ENCODE measurements at regions of chr22 and their contacts with region 1.

Region 1: DNA sequence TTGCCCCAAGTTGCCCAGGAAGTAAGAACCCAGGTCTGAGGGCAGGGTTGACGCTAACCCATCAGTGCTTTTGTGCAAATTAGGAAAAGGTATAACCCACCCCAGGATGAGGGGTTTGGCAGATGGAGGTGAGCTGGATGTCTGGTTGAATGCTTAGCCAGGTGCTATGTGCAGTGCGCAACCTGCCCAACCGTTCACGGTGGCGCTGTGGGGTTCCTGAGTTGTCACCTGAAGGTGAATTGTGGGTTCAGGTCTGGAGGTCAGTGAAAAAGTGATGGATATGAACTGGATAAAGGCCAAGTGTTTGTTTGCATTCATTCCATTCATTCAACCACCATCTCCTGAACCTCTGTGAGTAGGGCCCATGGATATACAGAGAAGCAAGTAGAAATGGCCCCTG is 14.3 kb upstream of the LGALS2 start:
- DNase-seq: no peak
- H3K4me3 Mint-ChIP-seq: no peak overlapping the region
- H3K27ac Mint-ChIP-seq: no peak overlapping the region
- H3K4me1 Mint-ChIP-seq: peaks cover 13% of the 10 kb centered on the region
- H3K27me3 Mint-ChIP-seq: no peaks in the 10 kb centered on the region

Region 2: GRCh38 chr22:37316875-37317371 is 277.3 kb before region 1 on chr22:
- CTCF ChIA-PET with region 1: interaction called, 4 read pairs
- intact Hi-C with region 1: loop called (anchors 1 kb)
- DNase-seq: peak; percentile 85
- H3K4me3 Mint-ChIP-seq: no peak overlapping the region
- H3K27ac Mint-ChIP-seq: no peak overlapping the region
- H3K4me1 Mint-ChIP-seq: peaks cover 21% of the 10 kb centered on the region
- H3K27me3 Mint-ChIP-seq: no peaks in the 10 kb centered on the region

Region 3: DNA sequence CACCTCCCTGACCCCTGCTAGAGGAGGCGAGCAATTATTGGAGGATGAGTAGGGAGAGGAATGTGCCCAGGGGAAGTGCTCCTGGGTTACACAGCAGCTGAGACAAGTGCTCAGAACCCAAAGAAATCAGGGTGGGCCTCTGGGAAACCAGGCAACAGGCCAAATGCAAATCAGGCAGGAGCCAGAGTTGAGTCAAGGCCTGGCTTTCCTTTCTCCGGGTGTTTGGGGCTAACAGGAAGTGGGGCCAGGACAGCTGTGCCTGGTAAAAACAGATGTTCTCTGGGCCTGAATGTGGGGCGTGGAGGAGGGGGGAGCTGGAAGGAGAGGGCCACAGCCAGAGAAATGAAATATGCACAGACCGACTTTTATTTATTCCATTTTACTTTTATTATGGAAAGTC is 130.1 kb before region 1 on chr22:
- CTCF ChIA-PET with region 1: no interaction called
- intact Hi-C with region 1: no loop called
- DNase-seq: no peak
- H3K4me3 Mint-ChIP-seq: no peak overlapping the region
- H3K27ac Mint-ChIP-seq: no peak overlapping the region
- H3K4me1 Mint-ChIP-seq: peaks cover 7% of the 10 kb centered on the region
- H3K27me3 Mint-ChIP-seq: no peaks in the 10 kb centered on the region

Region 4: DNA sequence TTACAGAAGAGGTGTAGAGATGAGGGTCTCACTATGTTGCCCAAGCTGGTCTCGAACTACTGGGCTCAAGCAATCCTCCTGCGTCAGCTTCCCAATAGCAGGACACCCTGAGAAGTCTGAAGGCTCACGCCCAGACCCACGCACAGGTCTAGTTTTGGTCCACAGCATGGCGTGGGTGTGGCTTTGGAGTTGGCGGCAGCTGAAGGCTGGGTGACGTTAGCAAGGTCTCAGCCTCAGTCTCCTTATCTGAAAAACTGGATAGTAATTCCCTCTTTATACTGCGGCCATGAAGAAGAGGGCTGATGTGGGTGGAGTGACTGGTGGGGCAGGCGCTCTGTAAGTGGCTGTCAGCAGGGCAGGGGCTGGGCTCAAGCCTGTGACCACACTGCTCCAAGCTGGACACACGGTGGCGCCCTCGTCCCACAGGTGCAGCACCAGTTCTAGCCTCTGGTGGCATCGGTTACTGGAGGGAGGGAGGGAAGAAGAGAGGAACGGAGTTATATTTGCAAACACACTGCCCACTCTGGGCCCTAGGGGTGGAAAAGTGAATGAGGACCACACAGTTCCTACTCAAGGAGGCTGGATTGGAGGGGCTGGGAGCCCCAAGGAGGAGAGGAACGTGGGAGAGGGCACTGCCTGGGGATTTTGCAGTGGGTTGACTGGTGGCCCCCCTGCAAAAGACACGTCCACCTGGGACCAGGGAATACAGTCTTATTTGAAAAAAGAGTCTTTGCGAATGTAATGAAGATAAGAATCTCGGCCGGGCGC is 55.5 kb before region 1 on chr22:
- CTCF ChIA-PET with region 1: interaction called, 87 read pairs
- intact Hi-C with region 1: loop called (anchors 1 kb)
- DNase-seq: peak; percentile 97
- H3K4me3 Mint-ChIP-seq: no peak overlapping the region
- H3K27ac Mint-ChIP-seq: no peak overlapping the region
- H3K4me1 Mint-ChIP-seq: peaks cover 34% of the 10 kb centered on the region
- H3K27me3 Mint-ChIP-seq: peaks cover 11% of the 10 kb centered on the region

Region 5: DNA sequence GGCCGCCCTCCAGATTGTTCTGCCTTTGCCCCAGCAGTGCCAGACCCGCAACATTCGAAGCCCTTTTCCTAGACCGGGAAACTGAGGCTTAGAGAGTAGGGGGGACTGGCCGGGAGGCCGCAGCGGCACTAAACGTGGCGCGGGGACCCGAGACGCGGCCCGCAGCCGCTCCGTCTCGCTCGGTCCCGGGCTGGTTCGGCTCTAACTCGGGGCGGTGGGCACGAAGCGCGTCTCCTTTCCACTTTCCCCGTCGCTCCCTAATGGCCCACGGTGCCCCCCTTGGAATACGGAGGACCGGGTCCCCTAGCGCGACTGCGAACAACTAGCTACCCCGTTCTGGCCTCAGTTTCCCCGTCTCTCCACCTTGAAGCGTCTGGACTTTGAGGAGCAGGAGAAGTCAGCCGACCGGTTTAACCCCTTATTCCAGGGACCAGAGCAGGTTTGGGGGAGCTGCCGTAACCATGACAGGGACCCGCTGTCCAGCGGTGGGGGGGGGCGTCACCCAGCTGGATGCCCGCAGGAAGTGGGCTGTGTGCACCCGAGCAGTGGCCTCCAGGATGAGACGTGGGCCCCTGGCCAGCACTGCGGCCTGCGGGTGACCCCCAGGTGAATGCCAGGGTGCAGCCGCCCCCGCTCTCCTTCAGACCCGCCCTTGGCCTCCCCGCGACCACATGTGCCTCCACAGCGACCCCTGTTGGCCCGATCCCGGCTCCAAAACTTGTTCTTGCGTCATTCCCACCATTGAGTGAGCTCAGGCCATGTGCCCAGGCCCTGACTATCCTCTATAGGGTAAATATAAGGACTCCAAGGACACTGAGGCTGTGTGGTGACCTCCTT is 32.8 kb before region 1 on chr22:
- CTCF ChIA-PET with region 1: interaction called, 34 read pairs
- intact Hi-C with region 1: no loop called
- DNase-seq: peak; percentile 92
- H3K4me3 Mint-ChIP-seq: peak overlapping the region; percentile 62
- H3K27ac Mint-ChIP-seq: no peak overlapping the region
- H3K4me1 Mint-ChIP-seq: peaks cover 19% of the 10 kb centered on the region
- H3K27me3 Mint-ChIP-seq: peaks cover 33% of the 10 kb centered on the region

Region 6: DNA sequence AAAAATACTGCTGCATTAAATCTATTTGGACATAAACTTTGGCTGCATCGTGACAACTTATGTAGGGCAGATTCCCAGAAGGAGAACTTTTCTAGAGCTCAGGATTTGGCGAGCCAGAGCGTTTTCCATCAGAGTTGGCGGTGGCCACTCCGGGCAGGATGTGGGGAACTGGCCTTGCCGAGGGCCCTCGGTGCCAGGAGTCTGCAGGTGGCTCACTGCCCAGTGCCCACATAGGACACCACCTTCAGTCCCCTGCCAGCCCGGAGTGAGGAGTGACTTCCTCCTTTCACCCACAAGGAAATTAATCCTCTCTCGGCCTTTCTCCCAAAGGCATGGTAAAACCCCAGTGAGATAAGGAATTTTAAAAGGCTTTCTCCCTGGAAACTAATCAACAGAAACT is 12.7 kb before region 1 on chr22:
- CTCF ChIA-PET with region 1: interaction called, 10 read pairs
- intact Hi-C with region 1: no loop called
- DNase-seq: no peak
- H3K4me3 Mint-ChIP-seq: no peak overlapping the region
- H3K27ac Mint-ChIP-seq: no peak overlapping the region
- H3K4me1 Mint-ChIP-seq: peaks cover 14% of the 10 kb centered on the region
- H3K27me3 Mint-ChIP-seq: no peaks in the 10 kb centered on the region

Region 7: GRCh38 chr22:38040953-38041759 is 446.9 kb after region 1 on chr22:
- CTCF ChIA-PET with region 1: no interaction called
- intact Hi-C with region 1: no loop called
- DNase-seq: no peak
- H3K4me3 Mint-ChIP-seq: no peak overlapping the region
- H3K27ac Mint-ChIP-seq: no peak overlapping the region
- H3K4me1 Mint-ChIP-seq: no peaks in the 10 kb centered on the region
- H3K27me3 Mint-ChIP-seq: no peaks in the 10 kb centered on the region

Measured in activated naive CD4-positive, alpha-beta T cell treated with anti-CD3 and anti-CD28 coated beads for 36 hours (primary cell).